Cardiac septum (tissue), 1 donor: ENCODE measurements at regions of chr7 and their contacts with region 1.

Region 1: DNA sequence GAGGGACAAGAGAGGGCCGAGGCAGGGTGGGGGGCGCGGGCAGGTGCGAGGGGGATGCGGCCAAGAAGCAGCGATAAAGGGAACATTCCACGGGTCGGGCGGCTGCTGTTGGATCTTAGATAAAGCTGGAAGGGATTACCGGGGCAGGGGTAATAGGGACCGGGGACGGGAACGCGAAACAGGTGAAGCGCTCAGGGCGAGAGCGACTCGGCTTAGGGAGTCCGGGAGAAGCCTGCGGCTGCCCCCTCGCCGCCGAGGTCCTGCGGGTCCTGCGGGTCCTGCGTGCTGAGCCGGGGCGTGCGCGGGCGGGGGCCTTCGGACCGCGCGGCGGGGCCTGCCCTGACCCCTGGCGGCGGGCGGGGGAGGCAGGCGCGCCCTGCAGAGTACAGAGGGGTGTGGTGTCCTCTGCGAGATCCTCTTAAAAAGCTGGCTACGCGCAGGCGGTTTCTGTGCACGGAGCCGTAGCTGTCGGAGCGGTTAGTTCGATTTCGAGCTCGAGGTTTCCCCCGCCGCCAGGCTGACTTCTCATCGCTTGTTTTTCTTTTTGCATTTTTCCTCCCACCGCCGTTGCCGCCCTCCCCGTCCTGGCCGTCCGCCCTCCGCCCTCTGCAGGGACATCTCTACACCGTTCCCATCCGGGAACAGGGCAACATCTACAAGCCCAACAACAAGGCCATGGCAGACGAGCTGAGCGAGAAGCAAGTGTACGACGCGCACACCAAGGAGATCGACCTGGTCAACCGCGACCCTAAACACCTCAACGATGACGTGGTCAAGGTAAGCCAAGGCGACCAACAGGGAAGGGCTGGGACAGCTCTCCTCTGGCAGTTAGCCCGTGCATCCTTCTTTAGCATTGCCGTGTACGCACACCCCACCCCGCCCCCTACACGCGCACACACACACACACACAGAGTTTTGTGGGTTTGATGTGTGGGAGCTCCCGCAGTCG is 1.4 kb downstream of the CAV1 start:
- DNase-seq: peak; percentile 89

Region 2: GRCh38 chr7:116271963-116272839 is 254.0 kb before region 1 on chr7:
- intact Hi-C with region 1: loop called (anchors 2 kb)
- DNase-seq: no peak

Region 3: GRCh38 chr7:116443101-116443523 is 83.1 kb before region 1 on chr7:
- intact Hi-C with region 1: loop called (anchors 5 kb)
- DNase-seq: no peak

Region 4: DNA sequence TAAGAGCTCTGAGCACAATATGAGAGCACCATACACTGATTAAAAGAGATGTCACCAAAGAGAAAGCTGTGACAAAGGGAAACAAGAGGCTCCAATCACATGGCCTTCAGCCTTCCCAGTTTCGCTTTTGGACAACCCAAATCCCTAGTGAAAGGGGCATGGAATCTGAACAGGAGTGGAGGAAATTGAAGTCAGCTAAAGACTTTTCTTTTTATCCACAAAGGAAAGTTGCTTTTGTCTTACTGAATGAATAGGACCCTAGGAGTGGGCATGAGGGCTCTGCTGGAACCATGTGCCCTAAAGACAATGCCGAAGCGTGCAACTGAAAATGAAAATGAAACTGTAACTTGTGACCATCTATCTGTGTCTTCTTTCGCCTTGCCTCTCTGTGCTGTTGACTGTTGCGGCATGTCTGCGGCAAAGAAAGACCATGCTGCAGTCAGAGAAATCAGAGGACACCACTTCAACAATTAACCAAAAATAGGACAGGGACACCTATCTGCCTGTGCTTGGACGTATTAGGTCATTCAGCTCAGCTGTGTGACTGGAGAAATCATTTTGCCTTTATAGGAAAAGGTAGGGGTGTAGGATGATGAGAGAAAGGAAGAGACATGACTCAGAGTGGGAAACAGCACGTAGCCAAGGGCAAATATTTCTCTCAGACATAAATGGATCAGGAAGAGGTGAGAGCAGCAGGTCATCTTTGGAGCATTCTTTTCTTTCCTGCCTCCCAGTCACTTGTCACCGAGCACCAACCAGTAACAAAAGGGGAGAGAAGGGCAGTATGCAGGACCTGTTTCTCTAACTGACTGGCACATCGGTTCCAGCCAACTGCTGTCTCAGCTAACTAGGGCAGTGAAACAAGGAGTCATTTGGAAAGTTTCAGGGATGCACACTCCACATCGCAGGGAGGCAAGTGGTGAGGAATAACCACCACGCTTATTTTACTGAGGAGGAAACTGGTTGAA is 14.4 kb before region 1 on chr7:
- intact Hi-C with region 1: loop called (anchors 2 kb)
- DNase-seq: no peak

Region 5: DNA sequence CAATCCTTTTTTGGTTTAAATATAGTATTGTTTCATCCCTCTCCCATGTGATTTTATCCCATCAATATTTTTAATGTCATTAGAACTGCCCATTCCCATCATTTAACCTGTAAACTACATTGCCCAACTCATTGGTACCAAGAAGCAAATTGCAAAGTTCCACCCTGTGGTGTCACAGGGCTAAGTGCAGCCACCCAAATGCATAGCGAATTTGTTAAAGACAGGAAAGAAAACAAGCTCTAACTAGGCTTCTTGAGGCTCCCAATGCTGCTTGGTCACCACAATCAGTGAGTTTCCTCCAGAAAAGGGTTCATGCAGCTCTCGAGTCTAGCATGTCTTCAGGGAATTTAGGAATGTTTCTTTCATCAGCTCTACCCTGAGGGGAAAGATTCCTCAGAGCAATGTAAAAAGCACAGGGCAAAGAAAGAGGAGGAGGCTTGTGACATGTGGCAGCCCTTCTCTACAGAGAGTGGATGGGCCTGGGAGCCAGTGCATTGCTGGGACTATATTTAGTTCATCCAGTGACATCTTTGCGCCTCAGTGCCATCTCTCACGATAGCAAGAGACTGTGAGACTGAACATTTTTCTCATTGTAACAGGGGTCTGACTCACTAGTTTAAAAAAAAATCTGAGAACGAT is 56.7 kb after region 1 on chr7:
- intact Hi-C with region 1: loop called (anchors 2 kb)
- DNase-seq: no peak